Right cardiac atrium (tissue), 5 donors: ENCODE measurements at regions of chr7 and their contacts with region 1.

Region 1: DNA sequence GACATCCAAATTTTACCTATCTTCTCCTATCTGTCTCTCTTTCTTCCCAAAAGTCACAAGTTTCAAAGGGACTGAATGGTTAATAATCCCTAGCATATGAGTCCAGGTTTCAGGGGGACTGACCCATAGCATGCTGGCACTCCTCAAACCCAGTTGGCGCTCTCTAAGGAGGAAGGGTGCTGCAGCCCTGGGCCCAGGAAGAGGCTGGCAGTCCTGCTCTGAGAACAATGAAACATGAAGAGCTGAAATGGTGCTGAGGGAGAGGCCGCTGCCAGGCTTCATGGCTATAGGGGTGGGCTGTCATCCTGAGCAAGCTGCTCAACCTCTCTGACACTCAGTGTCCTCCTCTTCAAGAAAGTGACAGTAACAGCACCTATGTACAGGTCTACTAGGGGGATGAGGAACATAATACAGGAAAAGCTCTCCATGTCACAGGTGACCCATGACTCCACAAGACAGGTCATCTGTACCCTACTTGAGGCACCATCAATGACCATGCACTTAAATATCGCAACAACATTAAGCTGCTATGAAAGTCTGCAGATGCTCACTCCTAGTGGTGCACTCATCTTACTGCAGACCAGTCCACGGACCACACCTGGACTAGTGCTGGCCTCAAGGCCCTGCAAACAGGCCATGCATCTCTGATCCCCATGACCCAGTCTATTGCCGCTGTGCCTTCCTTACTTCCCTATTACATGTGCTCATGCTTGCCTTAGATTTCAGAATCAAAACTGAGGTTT is 17.0 kb downstream of the COBL start:
- DNase-seq: no peak
- ATAC-seq: no peak
- H3K4me3 ChIP-seq: no peak overlapping the region
- H3K27ac ChIP-seq: no peak overlapping the region
- H3K4me1 ChIP-seq: no peaks in the 10 kb centered on the region
- H3K27me3 ChIP-seq: no peaks in the 10 kb centered on the region

Region 2: DNA sequence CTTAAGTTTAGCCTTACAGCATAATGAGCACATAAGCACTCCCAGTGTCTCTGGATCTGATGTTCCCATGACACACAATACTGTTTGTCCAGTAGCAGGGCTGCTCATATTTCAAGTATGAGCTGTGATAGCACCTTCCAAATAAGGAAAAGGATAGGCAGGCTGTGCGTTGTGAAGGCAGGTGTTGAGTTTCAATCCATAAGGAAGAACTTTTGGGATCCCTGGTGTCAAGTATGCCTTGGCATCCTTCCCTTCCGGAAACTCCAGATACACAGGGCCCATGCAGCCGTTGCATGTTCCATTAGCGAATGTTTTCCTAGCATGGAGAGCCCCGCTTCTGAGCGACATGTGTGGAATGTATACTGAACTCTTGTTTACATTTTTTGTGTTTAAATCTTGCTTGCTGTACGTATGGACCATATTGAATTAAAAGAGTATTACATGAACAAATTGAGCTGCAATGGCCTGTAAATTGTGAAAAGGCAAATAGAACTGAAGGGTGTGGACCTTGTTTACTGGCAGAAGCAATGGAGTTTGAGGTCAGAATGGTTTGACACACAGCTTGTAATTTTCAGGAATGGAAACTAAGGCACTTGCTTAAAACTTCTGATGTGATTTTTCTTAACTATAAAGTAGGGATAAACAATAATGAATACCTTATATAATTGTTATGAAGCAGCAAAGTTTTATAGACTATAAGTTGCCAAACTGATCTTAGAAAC is 50.8 kb after region 1 on chr7:
- intact Hi-C with region 1: loop called in 1 of 4 experiments (anchors 10 kb)
- DNase-seq: peak in 1 of 3 donors; percentile 19
- ATAC-seq: peak; percentile 78 to 82
- H3K4me3 ChIP-seq: no peak overlapping the region
- H3K27ac ChIP-seq: peak overlapping the region; percentile 58
- H3K4me1 ChIP-seq: peaks cover 6% of the 10 kb centered on the region
- H3K27me3 ChIP-seq: no peaks in the 10 kb centered on the region